ENCODE measurements at regions of chr2 and their contacts with region 1.

Region 1: DNA sequence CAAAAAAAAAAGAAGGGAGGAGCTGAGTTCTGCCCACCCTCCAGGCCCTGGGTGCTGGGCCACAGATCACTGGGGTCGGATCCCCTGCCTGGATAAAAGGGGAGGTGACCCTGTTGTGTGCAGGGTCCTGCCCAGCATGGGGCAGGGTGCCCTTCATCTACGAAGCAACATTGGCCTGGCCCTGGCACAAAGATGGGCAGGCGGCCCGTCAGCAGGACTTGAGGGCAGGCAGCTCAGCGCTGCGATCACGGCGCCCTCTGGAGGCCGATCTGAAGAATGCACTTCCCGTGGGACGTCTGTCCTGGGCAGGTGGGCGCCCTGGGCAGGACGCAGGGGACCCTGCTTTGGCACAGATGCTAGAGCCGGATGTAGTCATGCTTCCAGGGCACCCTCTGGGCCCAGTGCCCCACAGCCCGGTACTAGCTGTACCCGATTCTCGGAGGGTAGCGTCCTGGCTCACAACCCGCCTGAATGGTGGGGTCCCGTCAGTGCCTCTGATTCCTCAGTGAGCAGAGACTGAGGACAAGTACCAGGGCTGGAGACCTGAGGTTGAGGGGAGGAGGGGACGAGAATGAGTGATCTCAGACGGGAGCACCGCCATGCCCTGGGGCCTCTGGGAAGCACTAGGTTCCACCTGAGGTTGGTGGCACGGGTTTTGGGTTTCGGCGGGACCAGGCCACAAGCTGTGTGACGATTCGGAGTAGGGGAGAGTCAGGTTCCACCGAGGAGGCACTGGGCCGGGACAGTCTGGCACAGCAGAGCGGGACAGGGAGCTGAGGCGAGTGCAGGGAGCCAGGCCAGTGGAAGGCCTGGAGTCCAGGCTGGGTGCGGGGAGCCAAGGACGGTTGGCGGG is 18.0 kb downstream of the ARID5A start:
- DNase-seq: peak; percentile 82
- ATAC-seq: peak; percentile 74
- H3K4me3 Mint-ChIP-seq: peak overlapping the region; percentile 12; the same call in 1 of the 2 replicates
- H3K27ac Mint-ChIP-seq: no peak overlapping the region
- H3K4me1 Mint-ChIP-seq: peaks cover 19% of the 10 kb centered on the region
- H3K27me3 Mint-ChIP-seq: peaks cover 3% of the 10 kb centered on the region; the same call in 1 of the 2 replicates
- CTCF ChIP-seq: peak; percentile 93

Region 2: GRCh38 chr2:96407041-96407918 is 147.2 kb before region 1 on chr2:
- CTCF ChIA-PET with region 1: interaction called, 22 read pairs
- POLR2A ChIA-PET with region 1: no interaction called
- DNase-seq: peak; percentile 71
- ATAC-seq: peak; percentile 88
- H3K4me3 Mint-ChIP-seq: no peak overlapping the region
- H3K27ac Mint-ChIP-seq: no peak overlapping the region
- H3K4me1 Mint-ChIP-seq: peaks cover 30% of the 10 kb centered on the region
- H3K27me3 Mint-ChIP-seq: peaks cover 15% of the 10 kb centered on the region
- CTCF ChIP-seq: peak; percentile 82

Region 3: GRCh38 chr2:96521219-96521618 is 33.3 kb before region 1 on chr2:
- CTCF ChIA-PET with region 1: interaction called, 23 read pairs
- POLR2A ChIA-PET with region 1: no interaction called
- DNase-seq: no peak
- ATAC-seq: peak; percentile 47; the same call in 1 of the 2 replicates
- H3K4me3 Mint-ChIP-seq: no peak overlapping the region
- H3K27ac Mint-ChIP-seq: no peak overlapping the region
- H3K4me1 Mint-ChIP-seq: no peaks in the 10 kb centered on the region
- H3K27me3 Mint-ChIP-seq: peaks cover 9% of the 10 kb centered on the region
- CTCF ChIP-seq: no peak

Region 4: DNA sequence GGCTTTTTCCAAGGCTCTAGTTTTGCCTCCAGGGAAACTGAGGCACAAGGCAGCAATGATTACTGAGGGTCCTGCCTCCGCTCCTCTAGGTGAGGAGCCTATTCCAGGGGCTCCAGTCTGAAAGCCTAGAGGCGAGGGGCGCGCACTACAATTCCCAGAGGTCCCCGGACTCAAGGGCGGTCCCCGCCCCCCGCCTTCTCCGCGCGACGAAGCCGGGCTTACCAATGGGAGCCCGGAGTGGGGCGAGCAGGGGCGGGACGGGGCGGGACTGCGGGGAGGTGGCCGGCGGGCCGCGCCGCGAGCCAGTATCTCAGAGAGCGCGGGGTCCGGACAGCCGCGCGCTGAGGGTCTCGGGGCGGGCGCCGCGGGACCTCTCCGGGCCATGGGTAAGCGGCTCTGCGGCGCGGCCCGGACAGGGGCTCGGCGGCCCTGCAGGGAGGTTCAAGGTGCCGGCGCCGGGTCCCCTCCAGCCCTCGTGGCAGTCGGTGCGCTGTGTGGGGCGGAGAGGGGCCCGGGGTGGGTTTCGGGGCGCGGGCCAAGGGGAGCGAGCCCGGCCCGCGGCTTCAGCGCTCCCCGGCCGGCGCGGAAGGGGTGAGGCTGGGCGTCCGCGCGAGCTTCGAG is 18.0 kb before region 1 on chr2 and contains the start of gene ARID5A:
- CTCF ChIA-PET with region 1: interaction called, 117 read pairs
- POLR2A ChIA-PET with region 1: interaction called, 3 read pairs
- DNase-seq: peak; percentile 96
- ATAC-seq: peak; percentile 76
- H3K4me3 Mint-ChIP-seq: peak within 1 kb of the TSS; percentile 82
- H3K27ac Mint-ChIP-seq: no peak within 1 kb of the TSS
- H3K4me1 Mint-ChIP-seq: peaks cover 58% of the 10 kb centered on the region
- H3K27me3 Mint-ChIP-seq: peaks cover 19% of the 10 kb centered on the region
- CTCF ChIP-seq: no peak
- total RNA-seq, gene ARID5A: 8.5 to 13.9 TPM (median 10.1 TPM) in 3 replicates

Region 5: DNA sequence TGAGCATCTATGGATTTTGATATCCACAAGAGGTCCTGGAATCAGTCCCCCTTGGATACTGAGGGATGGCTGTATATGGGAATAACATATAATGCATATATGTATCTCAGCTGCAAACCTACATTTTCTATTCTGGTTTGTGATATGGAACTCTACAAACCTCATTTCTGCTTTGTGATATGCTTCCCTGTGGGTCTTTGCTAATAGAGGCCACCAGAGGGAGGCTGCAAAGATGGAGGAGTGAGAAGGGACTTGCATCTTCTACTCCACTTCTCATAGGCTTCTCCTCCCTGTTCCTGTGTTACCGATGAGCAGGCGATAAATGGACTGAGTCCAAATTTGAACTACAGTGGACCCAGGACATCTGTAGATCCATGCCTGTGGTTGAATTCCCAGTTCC is 19.8 kb after region 1 on chr2:
- CTCF ChIA-PET with region 1: interaction called, 11 read pairs
- POLR2A ChIA-PET with region 1: no interaction called
- DNase-seq: no peak
- ATAC-seq: no peak
- H3K4me3 Mint-ChIP-seq: no peak overlapping the region
- H3K27ac Mint-ChIP-seq: no peak overlapping the region
- H3K4me1 Mint-ChIP-seq: no peaks in the 10 kb centered on the region
- H3K27me3 Mint-ChIP-seq: no peaks in the 10 kb centered on the region
- CTCF ChIP-seq: no peak

Region 6: GRCh38 chr2:96642564-96643360 is 88.2 kb after region 1 on chr2 and contains the start of gene FER1L5:
- CTCF ChIA-PET with region 1: interaction called, 12 read pairs
- POLR2A ChIA-PET with region 1: interaction called, 4 read pairs
- DNase-seq: peak; percentile 70
- ATAC-seq: peak; percentile 81
- H3K4me3 Mint-ChIP-seq: peak within 1 kb of the TSS; percentile 85
- H3K27ac Mint-ChIP-seq: peak within 1 kb of the TSS; percentile 92
- H3K4me1 Mint-ChIP-seq: peaks cover 9% of the 10 kb centered on the region
- H3K27me3 Mint-ChIP-seq: peaks cover 9% of the 10 kb centered on the region
- CTCF ChIP-seq: no peak
- total RNA-seq, gene FER1L5: 1.1 to 1.4 TPM (median 1.1 TPM) in 3 replicates

Region 7: GRCh38 chr2:96801005-96801785 is 246.7 kb after region 1 on chr2:
- CTCF ChIA-PET with region 1: interaction called, 19 read pairs
- POLR2A ChIA-PET with region 1: no interaction called
- DNase-seq: peak; percentile 84
- ATAC-seq: peak; percentile 96
- H3K4me3 Mint-ChIP-seq: no peak overlapping the region
- H3K27ac Mint-ChIP-seq: no peak overlapping the region
- H3K4me1 Mint-ChIP-seq: no peaks in the 10 kb centered on the region
- H3K27me3 Mint-ChIP-seq: no peaks in the 10 kb centered on the region
- CTCF ChIP-seq: peak; percentile 79

Measured in WTC11 (cell line).